OCI-LY7 (cell line): ENCODE measurements at regions of chr19 and their contacts with region 1.

Region 1: DNA sequence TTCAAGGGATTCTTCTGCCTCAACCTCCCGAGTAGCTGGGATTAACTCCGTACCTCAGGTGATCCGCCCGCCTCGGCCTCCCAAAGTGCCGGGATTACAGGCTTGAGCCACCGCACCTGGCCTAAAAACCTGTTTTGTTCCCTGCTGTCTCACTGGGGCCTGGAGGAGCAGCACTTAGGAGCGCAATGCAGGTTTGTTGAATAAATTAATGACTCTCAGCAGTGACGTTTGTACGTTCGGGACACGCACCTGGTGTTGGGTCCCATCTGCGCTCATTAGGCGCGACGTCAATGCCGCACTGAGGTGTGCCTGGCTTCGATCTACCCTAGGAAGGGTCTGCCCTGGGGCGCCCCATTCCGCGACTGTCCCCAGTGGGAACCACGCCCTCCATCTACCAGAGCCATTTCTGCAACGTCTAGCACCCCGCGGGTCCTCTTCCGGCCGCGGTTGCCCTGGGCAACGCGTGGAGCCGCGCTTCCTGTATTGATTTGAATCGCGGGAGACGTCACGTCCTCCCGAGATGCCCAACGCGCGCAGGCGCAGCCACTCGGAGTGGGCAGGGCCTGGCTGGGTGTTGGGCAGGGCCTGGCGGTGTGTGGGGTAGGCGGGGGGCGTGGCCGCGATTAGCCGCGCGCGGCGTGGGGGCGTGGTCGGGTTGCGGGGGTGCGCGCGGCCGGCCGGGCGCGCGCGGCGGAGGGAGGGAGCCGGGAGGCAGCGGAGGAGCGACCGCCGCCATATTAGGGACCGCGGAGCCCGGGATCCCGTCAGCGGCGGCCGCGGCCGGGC is at the start of gene FZR1:
- DNase-seq: peak; percentile 99
- H3K4me3 ChIP-seq: peak within 1 kb of the TSS; percentile 100
- H3K27ac ChIP-seq: peak within 1 kb of the TSS; percentile 79
- H3K4me1 ChIP-seq: peaks cover 25% of the 10 kb centered on the region
- CTCF ChIP-seq: no peak
- total RNA-seq, gene FZR1: 39.8 and 61.2 TPM in 2 replicates

Region 2: GRCh38 chr19:3479834-3480215 is 26.0 kb before region 1 on chr19:
- CTCF ChIA-PET with region 1: no interaction called
- POLR2A ChIA-PET with region 1: interaction called, 4 read pairs
- intact Hi-C with region 1: loop called (anchors 1 kb)
- DNase-seq: peak; percentile 90
- H3K4me3 ChIP-seq: peak overlapping the region; percentile 65
- H3K27ac ChIP-seq: peak overlapping the region; percentile 84
- H3K4me1 ChIP-seq: peaks cover 47% of the 10 kb centered on the region
- CTCF ChIP-seq: no peak

Region 3: DNA sequence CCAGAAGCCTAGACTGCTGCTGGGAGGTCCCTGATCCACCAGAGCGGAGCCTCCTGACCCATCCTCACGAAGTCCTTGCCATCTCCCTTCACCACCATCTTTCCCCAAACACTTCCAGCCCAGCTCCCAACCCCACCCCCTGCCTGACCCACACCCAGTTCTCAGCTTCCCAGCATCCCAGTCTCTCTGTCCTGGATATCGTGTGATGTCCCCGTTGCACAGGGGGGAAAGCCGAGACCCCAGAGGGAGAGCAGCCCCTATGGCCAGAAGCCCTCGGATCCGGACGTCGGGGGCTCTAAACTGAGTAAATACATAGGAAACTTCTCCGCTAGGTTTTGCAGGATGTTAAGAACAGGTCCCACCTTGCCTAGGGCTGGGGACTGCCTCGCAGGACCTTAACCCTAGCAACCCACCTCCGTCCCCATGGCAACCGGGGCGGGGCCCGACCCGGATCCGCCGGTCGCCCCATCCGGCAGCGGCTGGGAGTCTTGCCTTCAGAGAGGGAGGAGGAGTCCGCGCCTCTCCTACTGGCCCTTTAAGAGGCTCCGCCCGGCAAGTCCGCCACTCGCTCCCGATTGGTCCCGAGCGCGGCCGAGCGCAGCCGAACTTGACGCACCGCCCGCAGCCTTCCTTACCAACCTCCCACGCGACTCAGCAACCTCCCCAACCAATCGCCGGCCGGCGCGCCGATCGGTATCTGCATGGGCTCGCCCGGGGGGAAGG is 66.5 kb after region 1 on chr19:
- CTCF ChIA-PET with region 1: no interaction called
- POLR2A ChIA-PET with region 1: no interaction called
- intact Hi-C with region 1: loop called (anchors 5 kb)
- DNase-seq: peak; percentile 99
- H3K4me3 ChIP-seq: peak overlapping the region; percentile 98
- H3K27ac ChIP-seq: peak overlapping the region; percentile 12
- H3K4me1 ChIP-seq: peaks cover 6% of the 10 kb centered on the region
- CTCF ChIP-seq: no peak

Region 4: GRCh38 chr19:3626473-3627350 is 120.9 kb after region 1 on chr19 and contains the start of gene CACTIN:
- CTCF ChIA-PET with region 1: no interaction called
- POLR2A ChIA-PET with region 1: no interaction called
- intact Hi-C with region 1: loop called (anchors 2 kb)
- DNase-seq: peak; percentile 99
- H3K4me3 ChIP-seq: peak within 1 kb of the TSS; percentile 100
- H3K27ac ChIP-seq: peak within 1 kb of the TSS; percentile 56
- H3K4me1 ChIP-seq: peaks cover 18% of the 10 kb centered on the region
- CTCF ChIP-seq: no peak
- total RNA-seq, gene CACTIN: 35.9 and 38.6 TPM in 2 replicates